ENCODE measurements at regions of chr10 and their contacts with region 1.

Region 1: GRCh38 chr10:110547139-110547761 is 20.2 kb upstream of the SMC3 start:
- DNase-seq: peak; percentile 68
- H3K4me3 Mint-ChIP-seq: no peak overlapping the region
- H3K27ac Mint-ChIP-seq: no peak overlapping the region
- H3K4me1 Mint-ChIP-seq: peaks cover 4% of the 10 kb centered on the region
- H3K27me3 Mint-ChIP-seq: no peaks in the 10 kb centered on the region
- CTCF ChIP-seq: peak; percentile 64

Region 2: GRCh38 chr10:108894402-108895301 is 1652.6 kb before region 1 on chr10:
- CTCF ChIA-PET with region 1: no interaction called
- POLR2A ChIA-PET with region 1: no interaction called
- intact Hi-C with region 1: no loop called
- DNase-seq: no peak
- H3K4me3 Mint-ChIP-seq: no peak overlapping the region
- H3K27ac Mint-ChIP-seq: no peak overlapping the region
- H3K4me1 Mint-ChIP-seq: no peaks in the 10 kb centered on the region
- H3K27me3 Mint-ChIP-seq: no peaks in the 10 kb centered on the region
- CTCF ChIP-seq: no peak

Region 3: GRCh38 chr10:110304780-110305421 is 242.3 kb before region 1 on chr10 and contains the start of gene SMNDC1:
- CTCF ChIA-PET with region 1: interaction called, 85 read pairs
- POLR2A ChIA-PET with region 1: interaction called, 4 read pairs
- intact Hi-C with region 1: loop called (anchors 1 kb)
- DNase-seq: peak; percentile 98
- H3K4me3 Mint-ChIP-seq: peak within 1 kb of the TSS; percentile 94
- H3K27ac Mint-ChIP-seq: peak within 1 kb of the TSS; percentile 95
- H3K4me1 Mint-ChIP-seq: peaks cover 10% of the 10 kb centered on the region
- H3K27me3 Mint-ChIP-seq: no peaks in the 10 kb centered on the region
- CTCF ChIP-seq: no peak
- total RNA-seq, gene SMNDC1: 46.6 and 48.2 TPM in 2 replicates

Region 4: GRCh38 chr10:110311357-110311949 is 235.8 kb before region 1 on chr10:
- CTCF ChIA-PET with region 1: interaction called, 85 read pairs
- POLR2A ChIA-PET with region 1: interaction called, 3 read pairs
- intact Hi-C with region 1: loop called (anchors 1 kb)
- DNase-seq: peak; percentile 77
- H3K4me3 Mint-ChIP-seq: no peak overlapping the region
- H3K27ac Mint-ChIP-seq: no peak overlapping the region
- H3K4me1 Mint-ChIP-seq: no peaks in the 10 kb centered on the region
- H3K27me3 Mint-ChIP-seq: no peaks in the 10 kb centered on the region
- CTCF ChIP-seq: peak; percentile 69

Region 5: GRCh38 chr10:110502851-110503301 is 44.4 kb before region 1 on chr10:
- CTCF ChIA-PET with region 1: interaction called, 17 read pairs
- POLR2A ChIA-PET with region 1: interaction called, 9 read pairs
- intact Hi-C with region 1: loop called (anchors 1 kb)
- DNase-seq: peak; percentile 94
- H3K4me3 Mint-ChIP-seq: peak overlapping the region; percentile 39
- H3K27ac Mint-ChIP-seq: peak overlapping the region; percentile 94
- H3K4me1 Mint-ChIP-seq: peaks cover 54% of the 10 kb centered on the region
- H3K27me3 Mint-ChIP-seq: no peaks in the 10 kb centered on the region
- CTCF ChIP-seq: no peak

Region 6: DNA sequence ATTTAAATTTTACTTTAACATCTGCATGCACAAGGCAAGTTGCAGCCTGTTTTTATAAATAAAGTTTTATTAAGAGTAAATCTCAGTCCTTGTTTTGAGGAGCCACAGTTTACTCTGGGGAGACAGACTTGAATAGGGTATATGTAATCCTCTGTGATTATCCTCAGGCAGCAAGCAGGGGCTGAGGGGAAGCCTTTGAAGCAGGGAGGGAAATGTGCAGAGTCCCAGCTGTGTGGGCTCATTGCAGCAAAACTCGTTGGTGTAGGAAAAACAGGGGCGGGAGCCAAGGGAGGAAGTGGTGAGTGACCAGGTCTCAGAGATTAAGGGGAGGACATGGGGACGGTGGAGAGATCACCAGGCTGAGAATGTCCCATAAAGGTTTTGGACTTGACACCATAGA is 14.1 kb before region 1 on chr10:
- CTCF ChIA-PET with region 1: interaction called, 13 read pairs
- POLR2A ChIA-PET with region 1: interaction called, 7 read pairs
- intact Hi-C with region 1: no loop called
- DNase-seq: no peak
- H3K4me3 Mint-ChIP-seq: no peak overlapping the region
- H3K27ac Mint-ChIP-seq: no peak overlapping the region
- H3K4me1 Mint-ChIP-seq: peaks cover 5% of the 10 kb centered on the region
- H3K27me3 Mint-ChIP-seq: no peaks in the 10 kb centered on the region
- CTCF ChIP-seq: no peak